ENCODE measurements at regions of chr22 and their contacts with region 1.

Region 1: DNA sequence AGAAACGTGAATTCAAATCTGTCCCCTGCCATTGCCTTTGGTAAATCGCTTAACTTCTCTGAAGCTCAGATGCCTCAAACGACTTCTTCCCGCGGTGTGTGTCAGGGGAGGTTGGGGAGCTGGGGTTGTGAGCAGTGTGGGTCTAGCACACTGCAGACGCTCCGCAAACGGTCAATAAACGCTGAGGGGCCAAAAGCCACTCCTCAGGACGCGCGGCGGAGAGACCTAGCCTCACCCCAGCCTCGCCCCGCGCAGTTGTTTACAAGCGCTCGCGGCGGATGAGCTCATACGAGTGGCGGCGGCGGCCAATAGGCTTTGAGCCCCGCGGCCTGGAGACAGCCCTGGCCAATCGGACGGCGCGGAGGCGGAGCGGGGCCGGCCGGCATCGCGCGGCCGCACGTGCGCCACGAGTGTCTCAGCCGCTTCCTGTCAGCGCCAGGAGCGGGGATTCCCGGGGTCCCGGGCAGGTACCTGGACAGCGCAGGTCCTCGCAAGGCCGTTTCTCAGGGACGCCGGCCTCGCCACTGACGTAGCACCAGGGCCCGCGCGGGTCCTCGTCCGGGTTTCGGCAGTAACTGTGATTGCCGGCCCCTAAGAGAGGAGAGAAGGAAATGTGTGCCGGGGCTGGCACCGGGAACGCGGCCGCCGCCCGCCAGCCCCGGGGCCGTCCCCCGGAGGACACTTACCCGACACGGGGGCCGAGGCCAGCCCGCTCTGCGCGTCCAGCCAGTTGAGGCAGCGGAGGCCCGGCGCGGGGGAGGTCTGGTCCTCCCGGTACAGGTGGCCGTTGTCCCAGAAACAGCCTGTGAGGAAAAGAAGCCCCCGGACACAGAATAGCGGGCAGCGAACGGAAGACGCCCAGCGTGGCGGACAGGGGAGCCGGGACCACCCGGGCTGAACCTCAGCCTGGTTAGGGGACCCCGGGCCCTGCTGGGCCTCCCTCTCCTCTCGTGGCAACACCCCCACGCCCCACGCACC is 1.5 kb downstream of the PIK3IP1 start:
- DNase-seq: peak; percentile 96 to 97 (median 96)
- H3K4me3 ChIP-seq: peak overlapping the region; percentile 89 to 99
- H3K4me3 Mint-ChIP-seq: peak overlapping the region; percentile 95 to 100 (median 98)
- H3K27ac ChIP-seq: peak overlapping the region; percentile 100
- H3K27ac Mint-ChIP-seq: peak overlapping the region; percentile 99 to 100 (median 100)
- H3K4me1 ChIP-seq: peaks cover 72% of the 10 kb centered on the region
- H3K4me1 Mint-ChIP-seq: peaks cover 41 to 83% (median 60%) of the 10 kb centered on the region in 4 donors
- H3K27me3 ChIP-seq: no peaks in the 10 kb centered on the region
- H3K27me3 Mint-ChIP-seq: no peaks in the 10 kb centered on the region

Region 2: DNA sequence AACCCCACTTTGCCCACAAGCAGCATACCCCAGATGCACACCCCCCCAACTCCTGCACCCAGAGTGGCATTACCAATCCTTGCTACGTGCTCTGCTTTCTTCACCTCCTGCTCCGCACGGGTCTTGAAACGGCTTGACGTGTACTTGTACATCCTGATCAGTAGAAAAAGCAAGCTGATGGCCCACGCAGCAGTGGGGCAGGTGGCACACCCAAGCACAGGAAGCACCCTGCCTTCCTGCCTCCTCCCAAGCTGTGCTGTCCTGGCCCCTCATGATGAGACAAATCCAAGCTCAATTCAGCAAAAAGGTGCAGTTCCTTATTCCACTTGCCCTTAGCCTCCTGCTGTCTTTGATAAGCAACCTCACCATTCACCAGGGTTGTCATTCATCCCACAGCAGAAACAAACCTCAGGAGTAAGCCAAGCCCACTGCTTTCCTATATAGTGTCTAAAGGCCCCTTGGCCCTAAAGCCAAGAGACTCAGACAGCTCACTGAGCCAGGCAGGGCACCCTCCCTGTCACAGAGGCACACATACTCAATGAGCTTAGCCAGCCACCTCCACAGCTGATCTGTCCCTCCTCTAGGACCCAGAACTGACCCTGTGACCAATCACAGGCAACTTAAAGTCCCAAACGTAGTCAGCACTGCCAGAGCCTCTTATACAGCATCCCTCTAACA is 350.0 kb before region 1 on chr22:
- CTCF ChIA-PET with region 1: no interaction called
- POLR2A ChIA-PET with region 1: interaction called, 19 read pairs
- intact Hi-C with region 1: no loop called
- DNase-seq: peak; percentile 49 to 66 (median 60)
- H3K4me3 ChIP-seq: peak overlapping the region; percentile 48 to 63
- H3K4me3 Mint-ChIP-seq: peak overlapping the region; percentile 86 to 94 (median 90)
- H3K27ac ChIP-seq: peak overlapping the region; percentile 57
- H3K27ac Mint-ChIP-seq: peak overlapping the region; percentile 89 to 97 (median 94)
- H3K4me1 ChIP-seq: peaks cover 88% of the 10 kb centered on the region
- H3K4me1 Mint-ChIP-seq: peaks cover 57 to 96% (median 77%) of the 10 kb centered on the region in 4 donors
- H3K27me3 ChIP-seq: no peaks in the 10 kb centered on the region
- H3K27me3 Mint-ChIP-seq: no peaks in the 10 kb centered on the region

Region 3: DNA sequence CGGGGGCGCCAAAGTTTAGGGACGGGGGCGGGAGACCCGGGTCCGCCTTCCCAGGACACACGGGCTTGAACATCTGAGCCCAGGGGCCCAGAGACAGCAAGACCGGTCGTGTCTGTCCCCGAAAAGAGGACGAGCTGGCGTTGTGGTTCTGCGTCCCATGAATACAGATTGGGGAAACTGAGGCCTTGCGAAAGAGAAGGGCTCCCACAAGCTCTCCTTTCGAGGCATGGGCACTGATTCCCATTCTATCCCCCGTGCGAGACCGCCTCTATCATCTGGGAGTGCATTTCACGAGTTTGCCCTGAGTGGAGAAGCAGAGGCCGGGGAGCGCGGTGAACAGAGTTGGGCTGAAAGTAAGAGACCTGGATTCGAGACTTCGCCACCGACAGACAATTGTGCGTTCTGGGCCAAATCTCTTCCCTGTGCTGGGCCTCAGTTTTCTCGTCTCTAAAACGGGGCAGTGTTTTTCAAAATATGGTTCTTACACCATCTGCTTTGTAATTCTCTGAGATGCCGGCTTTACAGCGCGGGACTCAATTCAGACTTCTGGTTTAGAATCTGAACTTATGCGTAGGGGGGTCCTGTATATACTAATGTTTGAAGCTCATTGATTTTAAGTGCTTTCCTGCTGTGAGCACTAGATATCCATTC is 130.3 kb before region 1 on chr22:
- CTCF ChIA-PET with region 1: no interaction called
- POLR2A ChIA-PET with region 1: interaction called, 37 read pairs
- intact Hi-C with region 1: no loop called
- DNase-seq: peak in 3 of 5 donors; percentile 2 to 14 (median 12)
- H3K4me3 ChIP-seq: peak overlapping the region; percentile 71 to 90
- H3K4me3 Mint-ChIP-seq: peak overlapping the region; percentile 96 to 100 (median 99)
- H3K27ac ChIP-seq: peak overlapping the region; percentile 79
- H3K27ac Mint-ChIP-seq: peak overlapping the region; percentile 89 to 100 (median 99)
- H3K4me1 ChIP-seq: peaks cover 23% of the 10 kb centered on the region
- H3K4me1 Mint-ChIP-seq: peaks cover 25 to 46% (median 31%) of the 10 kb centered on the region in 4 donors
- H3K27me3 ChIP-seq: no peaks in the 10 kb centered on the region
- H3K27me3 Mint-ChIP-seq: peaks cover 0 to 1% of the 10 kb centered on the region in 2 donors

Region 4: GRCh38 chr22:31253949-31254348 is 36.8 kb before region 1 on chr22:
- CTCF ChIA-PET with region 1: no interaction called
- POLR2A ChIA-PET with region 1: interaction called, 37 read pairs
- intact Hi-C with region 1: no loop called
- DNase-seq: no peak
- H3K4me3 ChIP-seq: no peak overlapping the region
- H3K4me3 Mint-ChIP-seq: no peak overlapping the region
- H3K27ac ChIP-seq: no peak overlapping the region
- H3K27ac Mint-ChIP-seq: no peak overlapping the region
- H3K4me1 ChIP-seq: peaks cover 2% of the 10 kb centered on the region
- H3K4me1 Mint-ChIP-seq: peaks cover 7 to 12% (median 11%) of the 10 kb centered on the region in 4 donors
- H3K27me3 ChIP-seq: no peaks in the 10 kb centered on the region
- H3K27me3 Mint-ChIP-seq: no peaks in the 10 kb centered on the region

Region 5: DNA sequence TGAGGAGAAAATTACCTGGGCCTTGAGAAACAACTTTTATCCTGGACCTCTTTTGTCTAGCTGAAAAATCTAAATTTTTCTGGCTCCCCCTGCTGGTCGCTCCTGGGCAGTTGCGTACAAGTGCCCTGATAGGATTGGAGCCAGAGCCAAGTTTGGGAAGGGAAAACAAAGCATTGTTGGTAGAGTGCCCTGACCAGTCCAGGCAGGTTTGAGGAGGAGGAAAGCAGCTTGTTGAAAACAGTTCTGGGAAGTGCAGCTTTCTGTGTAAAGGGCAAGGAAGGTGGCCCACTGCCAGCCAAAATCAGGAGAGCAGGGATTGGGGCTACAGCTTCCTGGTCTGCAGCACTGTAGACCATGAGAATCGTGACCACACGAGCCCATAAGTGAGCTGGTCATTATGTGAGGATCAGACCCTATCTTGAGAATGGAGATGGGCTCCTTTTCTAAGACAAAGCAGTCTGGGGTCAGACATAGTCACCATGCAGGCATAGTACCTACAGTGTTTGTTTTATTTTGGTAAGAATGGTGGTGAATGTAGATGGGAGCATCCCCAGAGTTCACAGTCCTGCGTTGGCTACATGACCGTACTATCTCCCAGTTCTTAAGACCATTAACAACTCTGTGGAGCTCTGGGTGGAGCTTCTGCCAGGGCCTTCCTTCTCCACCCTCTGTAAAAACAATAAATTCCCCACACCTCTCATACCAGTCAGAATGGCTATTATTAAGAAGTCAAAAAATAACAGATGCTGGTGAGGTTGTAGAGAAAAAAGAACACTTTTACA is 22.8 kb after region 1 on chr22:
- CTCF ChIA-PET with region 1: interaction called, 101 read pairs
- POLR2A ChIA-PET with region 1: interaction called, 306 read pairs
- intact Hi-C with region 1: loop called (anchors 1 kb)
- DNase-seq: peak; percentile 58 to 68 (median 60)
- H3K4me3 ChIP-seq: no peak overlapping the region
- H3K4me3 Mint-ChIP-seq: peak overlapping the region in 1 of 8 donors; percentile 10
- H3K27ac ChIP-seq: no peak overlapping the region
- H3K27ac Mint-ChIP-seq: peak overlapping the region in 5 of 7 donors; percentile 37 to 91 (median 78)
- H3K4me1 ChIP-seq: peaks cover 25% of the 10 kb centered on the region
- H3K4me1 Mint-ChIP-seq: peaks cover 6 to 20% (median 14%) of the 10 kb centered on the region in 4 donors
- H3K27me3 ChIP-seq: no peaks in the 10 kb centered on the region
- H3K27me3 Mint-ChIP-seq: no peaks in the 10 kb centered on the region

Region 6: GRCh38 chr22:31399211-31400028 is 108.6 kb after region 1 on chr22 and contains the start of gene DRG1:
- CTCF ChIA-PET with region 1: no interaction called
- POLR2A ChIA-PET with region 1: interaction called, 10 read pairs
- intact Hi-C with region 1: no loop called
- DNase-seq: peak; percentile 93 to 95 (median 94)
- H3K4me3 ChIP-seq: peak within 1 kb of the TSS; percentile 87 to 97
- H3K4me3 Mint-ChIP-seq: peak within 1 kb of the TSS; percentile 95 to 97 (median 96)
- H3K27ac ChIP-seq: peak within 1 kb of the TSS; percentile 92
- H3K27ac Mint-ChIP-seq: peak within 1 kb of the TSS; percentile 90 to 98 (median 96)
- H3K4me1 ChIP-seq: peaks cover 26% of the 10 kb centered on the region
- H3K4me1 Mint-ChIP-seq: peaks cover 16 to 24% (median 20%) of the 10 kb centered on the region in 4 donors
- H3K27me3 ChIP-seq: no peaks in the 10 kb centered on the region
- H3K27me3 Mint-ChIP-seq: peaks cover under 1% of the 10 kb centered on the region in 2 donors
- total RNA-seq, gene DRG1: 80.3 to 82.5 TPM

Region 7: DNA sequence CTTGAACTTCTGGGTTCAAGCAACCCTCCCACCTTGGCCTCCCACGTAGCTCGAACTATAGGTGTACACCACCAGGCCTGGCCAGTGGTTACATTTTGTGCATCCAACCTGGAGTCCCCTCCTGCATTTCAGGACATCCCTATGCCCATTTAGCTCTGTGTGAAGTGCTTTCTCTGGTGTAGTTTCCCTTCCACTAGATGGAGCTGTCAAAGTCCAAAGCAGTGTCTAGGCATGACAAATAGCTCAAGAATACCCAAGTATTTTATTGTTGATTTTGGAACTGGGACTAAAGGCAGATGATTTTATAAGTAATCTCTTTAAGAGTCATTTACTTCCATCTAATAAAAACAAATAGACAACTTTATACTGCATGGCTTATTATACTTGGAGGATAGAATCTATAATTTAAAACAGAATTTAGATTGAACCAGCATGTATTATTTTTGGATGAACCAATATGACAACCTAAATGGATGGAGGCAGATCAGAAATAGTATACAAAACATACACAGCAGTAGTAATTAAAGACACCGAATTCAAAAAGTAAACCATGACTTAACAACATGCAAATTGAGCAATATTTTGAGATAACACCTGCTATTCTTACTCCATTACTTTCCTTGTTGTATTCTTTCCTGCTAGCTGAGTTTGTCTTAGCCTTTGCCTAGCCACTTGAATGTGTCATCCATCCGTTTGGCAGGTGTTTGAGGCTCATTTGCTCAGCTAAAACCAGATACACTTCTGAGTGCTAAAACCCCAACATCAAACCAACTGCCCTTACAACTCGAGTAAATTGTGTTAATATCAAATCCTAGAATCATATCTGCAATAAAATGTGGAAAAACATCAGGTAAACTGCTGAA is 161.2 kb after region 1 on chr22:
- CTCF ChIA-PET with region 1: no interaction called
- POLR2A ChIA-PET with region 1: no interaction called
- intact Hi-C with region 1: no loop called
- DNase-seq: peak in 4 of 5 donors; percentile 16 to 22 (median 18)
- H3K4me3 ChIP-seq: no peak overlapping the region
- H3K4me3 Mint-ChIP-seq: no peak overlapping the region
- H3K27ac ChIP-seq: no peak overlapping the region
- H3K27ac Mint-ChIP-seq: peak overlapping the region in 4 of 7 donors; percentile 1 to 49 (median 28)
- H3K4me1 ChIP-seq: no peaks in the 10 kb centered on the region
- H3K4me1 Mint-ChIP-seq: no peaks in the 10 kb centered on the region
- H3K27me3 ChIP-seq: no peaks in the 10 kb centered on the region
- H3K27me3 Mint-ChIP-seq: no peaks in the 10 kb centered on the region

Measured in CD4-positive, alpha-beta memory T cell (primary cell).